ENCODE measurements at regions of chr17 and their contacts with region 1.

Region 1: GRCh38 chr17:63773381-63774140 is at the start of gene CCDC47:
- DNase-seq: peak; percentile 98 to 99 (median 98)
- H3K4me3 ChIP-seq: peak within 1 kb of the TSS; percentile 68
- H3K27ac ChIP-seq: peak within 1 kb of the TSS; percentile 84 to 96
- H3K4me1 ChIP-seq: peaks cover 3% of the 10 kb centered on the region
- H3K27me3 ChIP-seq: no peaks in the 10 kb centered on the region
- CTCF ChIP-seq: no peak
- EP300 ChIP-seq: peak; percentile 93
- POLR2A ChIP-seq: peak; percentile 99
- total RNA-seq, gene CCDC47: 31.1 to 72.0 (median 63.2) TPM

Region 2: GRCh38 chr17:63834431-63835166 is 61.0 kb after region 1 on chr17:
- intact Hi-C with region 1: loop called in 1 of 4 experiments (anchors 10 kb)
- DNase-seq: no peak
- H3K4me3 ChIP-seq: no peak overlapping the region
- H3K27ac ChIP-seq: no peak overlapping the region
- H3K4me1 ChIP-seq: peaks cover 11% of the 10 kb centered on the region
- H3K27me3 ChIP-seq: no peaks in the 10 kb centered on the region
- CTCF ChIP-seq: no peak
- EP300 ChIP-seq: no peak
- POLR2A ChIP-seq: no peak

Region 3: GRCh38 chr17:64145757-64146417 is 372.3 kb after region 1 on chr17:
- intact Hi-C with region 1: no loop called
- DNase-seq: peak; percentile 96 to 99 (median 98)
- H3K4me3 ChIP-seq: peak overlapping the region; percentile 73
- H3K27ac ChIP-seq: peak overlapping the region; percentile 82 to 98
- H3K4me1 ChIP-seq: peaks cover 5% of the 10 kb centered on the region
- H3K27me3 ChIP-seq: no peaks in the 10 kb centered on the region
- CTCF ChIP-seq: peak in 2 of 3 donors; percentile 9 to 23
- EP300 ChIP-seq: peak; percentile 59
- POLR2A ChIP-seq: peak; percentile 97